Esophagus muscularis mucosa (tissue), 4 donors: ENCODE measurements at regions of chr4 and their contacts with region 1.

Region 1: DNA sequence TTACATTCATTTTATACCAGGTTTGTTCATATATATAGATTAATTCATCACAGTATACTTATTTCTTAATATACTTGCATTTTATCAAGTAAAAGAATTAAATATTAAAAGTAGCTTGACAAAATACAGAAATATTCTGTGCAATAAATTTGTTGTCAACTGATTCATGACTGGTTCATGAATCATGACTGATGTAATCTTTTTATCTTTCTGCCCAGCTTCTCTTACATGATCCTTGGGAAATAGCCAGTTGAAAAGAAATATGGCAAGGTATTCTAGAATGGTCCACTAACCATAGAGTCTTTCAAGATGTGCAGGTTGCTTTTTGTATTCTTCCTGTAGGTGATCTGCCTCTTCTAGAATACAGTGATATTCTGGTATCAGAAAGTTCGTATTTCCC is 4.2 kb upstream of the CCNA2 start:
- DNase-seq: no peak
- H3K4me3 ChIP-seq: no peak overlapping the region
- H3K27ac ChIP-seq: no peak overlapping the region
- H3K4me1 ChIP-seq: peaks cover 5 to 18% (median 12%) of the 10 kb centered on the region in 4 donors
- H3K27me3 ChIP-seq: no peaks in the 10 kb centered on the region
- CTCF ChIP-seq: no peak
- EP300 ChIP-seq: no peak
- POLR2A ChIP-seq: no peak

Region 2: DNA sequence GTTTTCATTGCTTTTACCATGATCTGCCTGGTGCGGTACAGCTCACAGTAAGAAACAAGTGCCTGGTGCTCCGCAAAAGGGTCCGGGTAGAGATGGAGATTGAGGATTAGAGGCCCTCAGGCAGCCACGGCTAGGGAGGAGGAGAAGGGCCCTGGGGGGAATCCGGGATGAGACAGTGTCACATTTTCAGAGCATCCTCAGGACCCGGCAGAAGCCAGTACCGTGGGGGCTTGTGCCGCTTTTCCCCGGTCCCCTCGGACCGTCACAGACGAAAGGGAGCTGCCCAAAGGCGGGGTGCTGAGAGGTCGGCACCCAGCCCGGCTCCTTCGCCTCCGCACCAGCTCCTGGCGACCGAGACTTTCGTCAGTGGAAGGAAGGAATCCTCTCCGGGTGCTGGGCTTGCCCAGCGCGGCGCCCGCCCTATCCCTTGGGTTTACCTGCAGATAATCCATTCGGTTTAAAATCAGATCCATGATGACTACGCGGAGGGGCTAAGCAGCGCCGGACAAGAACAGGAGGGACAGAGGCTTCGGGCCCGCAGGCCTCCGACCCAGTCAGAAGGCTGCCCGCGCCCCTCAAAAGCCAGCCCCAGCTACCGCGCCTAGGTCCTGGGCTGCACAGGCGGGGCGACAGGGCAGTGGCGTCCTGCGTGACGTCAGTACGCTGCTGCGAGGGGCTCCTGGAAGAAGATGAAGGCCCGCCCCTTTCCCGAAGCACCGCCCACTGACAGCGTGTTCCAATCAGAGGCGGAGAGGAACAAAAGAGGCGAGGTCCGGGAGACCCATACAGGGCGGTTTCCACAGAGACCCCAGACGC is 42.2 kb after region 1 on chr4 and contains the start of gene BBS7:
- intact Hi-C with region 1: loop called (anchors 5 kb)
- DNase-seq: peak; percentile 100
- H3K4me3 ChIP-seq: peak within 1 kb of the TSS; percentile 81 to 92 (median 88)
- H3K27ac ChIP-seq: peak within 1 kb of the TSS; percentile 92 to 96 (median 94)
- H3K4me1 ChIP-seq: peaks cover 0 to 18% (median 13%) of the 10 kb centered on the region in 4 donors
- H3K27me3 ChIP-seq: no peaks in the 10 kb centered on the region
- CTCF ChIP-seq: no peak
- EP300 ChIP-seq: no peak
- POLR2A ChIP-seq: peak; percentile 57
- total RNA-seq, gene BBS7: 14.3 to 17.9 (median 15.2) TPM

Region 3: DNA sequence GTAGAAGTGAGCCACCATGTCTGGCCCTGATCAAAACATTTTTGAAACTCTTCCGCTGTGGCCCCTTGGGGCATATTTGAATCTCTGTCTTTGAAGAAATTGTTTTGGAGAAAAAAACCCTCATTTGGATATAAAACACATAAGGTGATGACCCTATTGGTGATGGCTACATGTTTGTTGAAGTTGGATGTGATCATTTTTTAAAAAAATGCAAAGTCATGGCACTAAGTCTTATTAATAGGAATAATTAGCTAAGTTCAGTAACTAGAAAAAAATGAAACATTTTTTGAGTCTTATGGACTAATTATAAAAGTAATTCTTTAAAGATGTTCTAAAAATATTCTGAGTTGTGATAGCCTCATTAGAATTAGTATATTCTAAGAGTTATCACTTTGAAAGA is 60.3 kb after region 1 on chr4:
- intact Hi-C with region 1: no loop called
- DNase-seq: no peak
- H3K4me3 ChIP-seq: no peak overlapping the region
- H3K27ac ChIP-seq: no peak overlapping the region
- H3K4me1 ChIP-seq: no peaks in the 10 kb centered on the region
- H3K27me3 ChIP-seq: no peaks in the 10 kb centered on the region
- CTCF ChIP-seq: no peak
- EP300 ChIP-seq: no peak
- POLR2A ChIP-seq: no peak

Region 4: GRCh38 chr4:121998002-121998401 is 170.1 kb after region 1 on chr4:
- intact Hi-C with region 1: no loop called
- DNase-seq: no peak
- H3K4me3 ChIP-seq: no peak overlapping the region
- H3K27ac ChIP-seq: no peak overlapping the region
- H3K4me1 ChIP-seq: no peaks in the 10 kb centered on the region
- H3K27me3 ChIP-seq: no peaks in the 10 kb centered on the region
- CTCF ChIP-seq: no peak
- EP300 ChIP-seq: no peak
- POLR2A ChIP-seq: no peak